ENCODE measurements at regions of chr6 and their contacts with region 1.

Region 1: GRCh38 chr6:136317021-136317694 is 27.5 kb upstream of the BCLAF1 start:
- DNase-seq: peak; percentile 79
- H3K4me3 Mint-ChIP-seq: no peak overlapping the region
- H3K27ac Mint-ChIP-seq: no peak overlapping the region
- H3K4me1 Mint-ChIP-seq: no peaks in the 10 kb centered on the region
- H3K27me3 Mint-ChIP-seq: no peaks in the 10 kb centered on the region
- CTCF ChIP-seq: peak; percentile 63

Region 2: GRCh38 chr6:135451693-135452092 is 865.5 kb before region 1 on chr6:
- CTCF ChIA-PET with region 1: interaction called, 4 read pairs
- POLR2A ChIA-PET with region 1: no interaction called
- intact Hi-C with region 1: loop called (anchors 5 kb)
- DNase-seq: peak; percentile 57
- H3K4me3 Mint-ChIP-seq: no peak overlapping the region
- H3K27ac Mint-ChIP-seq: no peak overlapping the region
- H3K4me1 Mint-ChIP-seq: no peaks in the 10 kb centered on the region
- H3K27me3 Mint-ChIP-seq: no peaks in the 10 kb centered on the region
- CTCF ChIP-seq: peak; percentile 61

Region 3: DNA sequence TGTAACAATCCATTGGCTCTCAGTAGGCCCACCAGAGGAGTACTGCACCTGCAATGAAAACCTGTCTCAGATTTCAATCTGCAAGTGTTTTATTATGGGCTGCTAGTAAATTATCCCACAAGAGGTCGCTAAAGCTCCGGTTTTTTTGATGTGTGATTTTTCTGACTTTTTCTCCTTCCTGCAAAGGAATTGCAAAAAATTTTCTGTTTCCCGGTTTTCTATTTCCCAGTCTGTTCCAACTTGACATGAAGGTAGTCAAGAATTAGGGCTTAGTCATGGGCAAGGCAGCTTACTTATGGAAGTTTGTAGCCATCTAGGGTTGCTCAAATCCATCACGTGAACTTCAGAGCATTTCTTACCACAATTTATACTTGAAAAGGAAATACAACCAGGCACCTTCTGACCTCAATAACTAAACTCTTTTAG is 781.2 kb before region 1 on chr6:
- CTCF ChIA-PET with region 1: interaction called, 5 read pairs
- POLR2A ChIA-PET with region 1: no interaction called
- intact Hi-C with region 1: loop called (anchors 5 kb)
- DNase-seq: peak; percentile 79
- H3K4me3 Mint-ChIP-seq: no peak overlapping the region
- H3K27ac Mint-ChIP-seq: no peak overlapping the region
- H3K4me1 Mint-ChIP-seq: peaks cover 9% of the 10 kb centered on the region
- H3K27me3 Mint-ChIP-seq: no peaks in the 10 kb centered on the region
- CTCF ChIP-seq: peak; percentile 49

Region 4: GRCh38 chr6:136289579-136290409 is 27.4 kb before region 1 on chr6 and contains the start of gene BCLAF1:
- CTCF ChIA-PET with region 1: interaction called, 11 read pairs
- POLR2A ChIA-PET with region 1: interaction called, 19 read pairs
- intact Hi-C with region 1: no loop called
- DNase-seq: peak; percentile 98
- H3K4me3 Mint-ChIP-seq: peak within 1 kb of the TSS; percentile 96
- H3K27ac Mint-ChIP-seq: peak within 1 kb of the TSS; percentile 100
- H3K4me1 Mint-ChIP-seq: peaks cover 17% of the 10 kb centered on the region
- H3K27me3 Mint-ChIP-seq: no peaks in the 10 kb centered on the region
- CTCF ChIP-seq: no peak
- total RNA-seq, gene BCLAF1: 175 and 178 TPM in 2 replicates

Region 5: DNA sequence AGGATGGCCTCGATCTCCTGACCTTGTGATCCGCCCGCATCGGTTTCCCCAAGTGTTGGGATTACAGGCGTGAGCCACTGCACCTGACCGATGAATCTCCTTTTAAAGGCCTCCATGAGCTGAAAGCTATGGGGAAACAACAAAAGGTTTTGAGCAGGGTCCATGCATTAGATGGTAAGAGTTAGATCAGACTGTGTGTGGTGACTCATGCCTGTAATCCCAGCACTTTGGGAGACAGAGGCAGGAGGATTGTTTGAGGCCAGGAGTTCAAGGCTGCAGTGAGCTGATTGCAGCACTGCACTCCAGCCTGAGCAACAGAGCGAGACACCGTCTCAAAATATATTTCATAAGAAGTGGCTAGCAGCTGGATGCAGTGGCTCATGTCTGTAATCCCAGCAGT is 13.5 kb after region 1 on chr6:
- CTCF ChIA-PET with region 1: interaction called, 16 read pairs
- POLR2A ChIA-PET with region 1: interaction called, 4 read pairs
- intact Hi-C with region 1: no loop called
- DNase-seq: no peak
- H3K4me3 Mint-ChIP-seq: no peak overlapping the region
- H3K27ac Mint-ChIP-seq: no peak overlapping the region
- H3K4me1 Mint-ChIP-seq: no peaks in the 10 kb centered on the region
- H3K27me3 Mint-ChIP-seq: no peaks in the 10 kb centered on the region
- CTCF ChIP-seq: no peak